ENCODE measurements at regions of chr9 and their contacts with region 1.

Region 1: GRCh38 chr9:72718503-72718902 is 197.1 kb downstream of the TMC1 start:
- DNase-seq: no peak
- ATAC-seq: no peak

Region 2: DNA sequence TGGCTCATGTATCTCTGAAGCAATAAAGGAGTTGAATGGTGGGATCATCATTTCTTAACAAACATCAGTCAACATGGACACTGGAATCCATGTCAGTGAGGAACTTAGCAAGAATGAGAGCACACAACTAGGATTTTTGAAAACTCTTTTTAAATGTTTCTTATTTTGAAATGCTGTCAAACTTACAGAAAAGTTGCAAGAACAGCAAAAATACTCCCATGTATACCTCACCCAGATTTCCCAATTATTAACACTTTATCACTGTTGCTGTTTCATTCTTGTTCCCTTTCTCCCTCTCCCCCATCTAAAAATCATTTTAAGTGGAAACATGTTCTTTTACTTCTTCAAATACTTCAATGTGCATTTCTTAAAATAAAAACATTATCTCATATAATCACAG is 1844.1 kb after region 1 on chr9:
- intact Hi-C with region 1: loop called (anchors 10 kb)
- DNase-seq: no peak
- ATAC-seq: no peak